BJ (cell line): ENCODE measurements at regions of chr21 and their contacts with region 1.

Region 1: DNA sequence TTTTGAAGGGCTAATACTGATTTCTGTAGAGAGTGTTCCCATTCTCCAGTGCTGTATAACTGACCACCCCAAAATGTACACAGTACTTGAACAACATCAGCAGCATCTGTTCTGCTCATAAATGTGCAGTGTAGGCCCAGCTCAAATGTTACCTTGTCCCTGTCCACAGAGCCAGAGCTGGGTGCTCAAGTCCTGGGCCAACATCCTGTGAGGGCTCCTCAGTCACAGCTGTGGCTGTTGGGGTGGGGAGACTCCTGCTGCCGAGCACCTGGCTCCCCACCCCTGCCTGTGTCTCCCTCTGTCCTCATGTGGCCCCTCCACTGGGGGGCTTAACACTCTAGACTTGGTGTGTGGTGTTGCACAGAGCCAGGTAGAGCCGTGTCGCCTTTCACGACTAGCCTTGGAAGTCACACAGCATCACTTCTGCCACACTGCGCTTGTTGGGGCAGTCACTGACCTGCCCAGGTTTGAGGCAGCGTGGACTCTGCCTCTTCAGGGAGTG is 30.5 kb downstream of the DIP2A start:
- DNase-seq: no peak
- H3K4me3 ChIP-seq: no peak overlapping the region
- H3K27me3 ChIP-seq: no peaks in the 10 kb centered on the region
- CTCF ChIP-seq: no peak

Region 2: DNA sequence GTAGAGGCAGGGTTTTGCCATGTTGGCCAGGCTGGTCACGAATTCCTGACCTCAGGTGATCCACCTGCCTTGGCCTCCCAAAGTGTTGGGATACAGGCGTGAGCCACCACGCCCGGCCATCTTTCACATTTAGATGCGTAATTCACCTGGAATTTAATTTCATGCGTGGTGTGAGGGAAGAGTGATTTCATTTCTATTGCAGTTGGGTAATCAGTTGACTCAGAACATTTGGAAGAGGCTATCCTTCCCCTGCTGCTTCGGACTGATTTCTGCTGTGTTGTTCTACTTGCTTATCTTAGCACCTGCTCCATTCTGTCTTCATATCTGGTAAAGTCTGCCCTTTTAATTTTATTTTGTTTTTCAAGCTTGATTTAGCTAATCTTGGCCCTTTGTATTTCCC is 11.4 kb before region 1 on chr21:
- CTCF ChIA-PET with region 1: no interaction called
- POLR2A ChIA-PET with region 1: no interaction called
- DNase-seq: no peak
- H3K4me3 ChIP-seq: no peak overlapping the region
- H3K27me3 ChIP-seq: no peaks in the 10 kb centered on the region
- CTCF ChIP-seq: no peak

Region 3: DNA sequence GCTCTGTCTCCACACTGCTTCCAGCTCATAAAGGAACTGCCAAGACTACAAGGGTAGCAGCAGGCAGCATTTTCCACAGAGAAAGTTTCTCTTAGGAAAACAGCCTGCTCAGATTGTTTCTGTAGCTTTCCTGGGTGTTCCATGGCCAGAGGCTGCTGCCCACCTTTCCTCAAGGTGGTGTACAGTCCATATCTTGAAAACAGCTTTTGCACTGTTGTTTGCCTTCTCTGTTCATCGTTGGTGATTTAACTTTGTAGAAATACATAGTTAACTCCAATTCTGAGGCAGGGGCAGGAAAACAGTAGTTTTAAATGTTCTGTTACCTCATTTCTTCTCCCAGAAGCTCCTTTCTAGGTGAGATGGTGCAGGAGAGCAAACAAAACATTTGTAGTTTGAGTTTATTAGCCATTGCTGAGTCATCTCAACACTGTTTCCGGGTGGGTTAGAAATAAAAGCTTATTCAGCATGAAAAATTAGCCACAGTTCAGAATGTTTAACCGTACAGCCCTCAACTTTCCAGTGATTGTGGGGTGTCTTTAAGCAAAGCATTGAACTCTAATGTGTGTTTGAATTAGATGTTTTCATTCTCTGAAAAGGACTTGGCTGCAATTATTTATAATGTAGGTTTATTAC is 11.1 kb after region 1 on chr21:
- CTCF ChIA-PET with region 1: interaction called, 10 read pairs
- POLR2A ChIA-PET with region 1: no interaction called
- DNase-seq: no peak
- H3K4me3 ChIP-seq: no peak overlapping the region
- H3K27me3 ChIP-seq: no peaks in the 10 kb centered on the region
- CTCF ChIP-seq: no peak

Region 4: DNA sequence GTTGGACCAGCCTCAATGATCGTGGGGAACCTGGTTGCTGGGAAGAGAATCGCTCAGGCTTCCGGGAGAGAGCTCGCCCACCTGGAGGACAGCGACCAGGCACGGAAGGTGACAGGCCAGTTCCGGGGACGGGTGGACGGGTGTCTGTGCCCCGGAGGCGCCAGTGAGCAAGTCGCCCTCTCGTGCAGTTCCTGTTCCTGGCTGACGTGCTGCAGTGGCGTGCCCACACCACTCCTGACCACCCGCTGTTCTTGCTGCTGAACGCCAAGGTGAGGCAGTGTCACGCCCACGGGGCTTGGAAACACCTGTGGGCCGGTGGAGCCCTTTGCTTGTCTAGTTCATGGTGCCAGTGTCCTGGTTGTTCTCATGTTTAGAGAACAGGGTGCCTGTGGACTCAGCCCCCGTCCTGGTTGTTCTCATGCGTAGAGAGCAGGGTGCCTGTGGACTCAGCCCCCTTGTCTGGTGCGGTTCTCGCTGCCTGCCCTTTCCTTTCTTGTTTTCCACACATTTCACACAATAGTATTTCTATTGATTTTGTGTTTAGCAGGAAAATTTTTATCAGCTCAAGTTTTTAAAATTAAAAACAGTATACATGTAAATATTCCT is 62.5 kb after region 1 on chr21:
- CTCF ChIA-PET with region 1: no interaction called
- POLR2A ChIA-PET with region 1: no interaction called
- DNase-seq: no peak
- H3K4me3 ChIP-seq: no peak overlapping the region
- H3K27me3 ChIP-seq: no peaks in the 10 kb centered on the region
- CTCF ChIP-seq: no peak